ENCODE measurements at regions of chr6 and their contacts with region 1.

Region 1: DNA sequence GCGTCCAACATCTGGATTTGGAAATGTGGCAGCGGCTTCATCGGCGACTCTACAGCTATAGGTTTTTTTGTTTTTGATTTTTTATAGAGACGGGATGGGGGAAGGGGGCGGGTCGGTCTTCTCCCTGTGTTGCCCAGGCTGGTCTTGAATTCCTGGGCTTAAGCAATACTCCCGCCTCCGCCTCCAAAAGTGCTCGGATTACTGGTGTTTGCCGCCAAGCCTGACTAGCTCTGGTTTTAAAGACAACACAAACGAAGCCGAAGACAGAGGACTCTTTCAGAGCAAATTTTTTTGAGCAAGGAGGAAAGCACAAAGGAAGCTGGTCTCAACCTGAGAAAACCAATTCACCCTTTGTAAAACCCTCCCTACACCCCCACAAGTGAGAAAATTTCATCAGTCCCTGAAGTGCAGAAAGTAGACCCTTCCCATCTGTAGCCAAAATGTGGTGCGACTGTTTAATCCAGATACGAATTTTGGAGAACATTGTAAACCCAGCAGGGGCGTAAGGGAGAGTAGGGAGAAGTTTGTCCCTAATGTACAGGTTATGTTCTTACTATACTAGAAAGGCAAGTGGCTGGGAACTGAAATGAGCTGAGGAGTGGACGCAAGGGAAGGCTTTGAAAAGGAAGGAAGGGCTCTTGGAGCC is 185.9 kb downstream of the TRIM27 start:
- DNase-seq: no peak
- H3K4me3 Mint-ChIP-seq: peak overlapping the region; percentile 1
- H3K27ac Mint-ChIP-seq: no peak overlapping the region
- H3K4me1 Mint-ChIP-seq: peaks cover 6% of the 10 kb centered on the region
- H3K27me3 Mint-ChIP-seq: peaks cover 64% of the 10 kb centered on the region

Region 2: GRCh38 chr6:28695715-28696114 is 42.2 kb before region 1 on chr6:
- intact Hi-C with region 1: loop called (anchors 5 kb)
- DNase-seq: no peak
- H3K4me3 Mint-ChIP-seq: no peak overlapping the region
- H3K27ac Mint-ChIP-seq: no peak overlapping the region
- H3K4me1 Mint-ChIP-seq: peaks cover 7% of the 10 kb centered on the region
- H3K27me3 Mint-ChIP-seq: peaks cover 84% of the 10 kb centered on the region

Region 3: GRCh38 chr6:28776269-28777146 is 38.6 kb after region 1 on chr6:
- intact Hi-C with region 1: loop called (anchors 2 kb)
- DNase-seq: no peak
- H3K4me3 Mint-ChIP-seq: no peak overlapping the region
- H3K27ac Mint-ChIP-seq: no peak overlapping the region
- H3K4me1 Mint-ChIP-seq: peaks cover 7% of the 10 kb centered on the region
- H3K27me3 Mint-ChIP-seq: peaks cover 87% of the 10 kb centered on the region

Region 4: DNA sequence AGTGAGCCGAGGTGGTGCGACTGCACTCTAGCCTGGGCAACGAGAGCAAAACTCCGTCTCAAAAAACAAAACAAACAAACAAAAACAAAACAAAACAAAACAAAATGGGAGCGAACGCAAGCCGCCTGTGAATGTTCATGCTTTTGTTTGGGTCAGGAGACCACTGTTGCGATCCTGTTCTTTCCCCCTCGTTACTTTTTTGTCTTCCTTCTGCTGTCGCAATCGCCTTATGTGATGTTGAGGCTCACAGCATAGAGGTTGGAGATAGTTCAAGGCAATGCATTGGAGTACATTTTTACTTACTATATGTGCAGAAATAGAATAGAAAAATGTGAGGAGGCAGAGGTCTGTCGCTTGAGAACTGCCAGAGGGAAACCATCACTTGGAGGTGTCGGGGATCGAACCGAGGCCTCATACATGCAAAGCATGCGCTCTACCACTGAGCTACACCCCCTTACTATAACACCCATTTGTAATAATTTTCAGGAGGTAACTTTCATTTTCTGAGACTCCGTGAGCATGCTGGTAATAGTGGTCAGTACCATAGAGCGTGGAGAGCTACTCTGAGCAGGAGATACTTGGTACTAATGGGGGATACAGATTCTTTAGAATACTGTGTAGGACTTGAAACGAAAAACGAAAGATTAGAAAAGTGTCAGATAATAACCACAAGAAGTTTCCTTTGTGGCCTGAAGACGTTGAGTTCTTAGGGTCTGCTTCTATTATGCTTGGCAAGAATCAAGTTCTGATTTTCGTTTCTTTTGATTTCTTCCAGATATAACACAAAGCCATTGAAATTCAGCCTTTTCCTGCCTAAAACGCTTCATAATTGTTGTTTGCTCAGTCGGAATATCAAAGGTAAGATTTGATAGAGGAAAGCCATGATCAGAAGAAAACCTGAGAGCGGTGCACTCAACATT is 64.8 kb after region 1 on chr6:
- intact Hi-C with region 1: no loop called
- DNase-seq: no peak
- H3K4me3 Mint-ChIP-seq: no peak overlapping the region
- H3K27ac Mint-ChIP-seq: no peak overlapping the region
- H3K4me1 Mint-ChIP-seq: peaks cover 10% of the 10 kb centered on the region
- H3K27me3 Mint-ChIP-seq: peaks cover 69% of the 10 kb centered on the region

Region 5: DNA sequence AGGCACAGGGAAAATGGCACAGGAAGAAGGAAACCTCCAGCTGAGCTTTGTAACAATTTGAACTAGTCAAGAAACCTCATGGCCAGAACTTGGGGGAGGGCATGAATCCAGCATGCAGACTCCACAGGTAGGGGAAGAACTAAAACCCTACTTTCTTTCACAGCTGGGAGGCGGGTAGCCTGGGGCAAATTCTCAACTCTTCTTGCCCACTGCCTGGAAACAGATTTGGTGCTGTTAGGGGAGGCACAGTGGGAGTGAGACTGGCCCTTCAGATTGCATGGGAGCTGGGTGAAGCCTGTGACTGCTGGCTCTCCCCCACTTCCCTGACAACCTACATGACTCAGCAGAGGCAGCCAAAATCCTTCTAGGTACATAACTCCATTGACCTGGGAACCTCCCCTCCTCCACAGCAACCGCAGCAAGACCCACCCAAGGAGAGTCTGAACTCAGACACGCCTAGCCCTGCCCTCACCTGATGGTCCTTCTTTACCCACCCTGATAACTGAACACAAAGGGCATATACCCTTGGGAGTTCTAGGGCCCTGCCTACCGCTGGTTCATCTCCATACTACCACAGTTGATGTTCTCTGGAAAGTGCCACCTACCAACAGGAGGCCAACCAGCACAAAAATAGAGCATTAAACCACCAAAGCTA is 223.1 kb after region 1 on chr6:
- intact Hi-C with region 1: no loop called
- DNase-seq: no peak
- H3K4me3 Mint-ChIP-seq: no peak overlapping the region
- H3K27ac Mint-ChIP-seq: no peak overlapping the region
- H3K4me1 Mint-ChIP-seq: no peaks in the 10 kb centered on the region
- H3K27me3 Mint-ChIP-seq: peaks cover 17% of the 10 kb centered on the region